ENCODE measurements at regions of chr19 and their contacts with region 1.

Region 1: GRCh38 chr19:11380653-11381534 is 3.2 kb downstream of the EPOR start:
- DNase-seq: peak; percentile 95
- H3K4me3 ChIP-seq: peak overlapping the region; percentile 47 to 61 (median 47)
- H3K27ac ChIP-seq: peak overlapping the region; percentile 66
- H3K4me1 ChIP-seq: peaks cover 44% of the 10 kb centered on the region
- H3K27me3 ChIP-seq: no peaks in the 10 kb centered on the region
- CTCF ChIP-seq: peak; percentile 71 to 86
- POLR2A ChIP-seq: peak; percentile 36

Region 2: GRCh38 chr19:11115895-11116446 is 264.9 kb before region 1 on chr19:
- CTCF ChIA-PET with region 1: no interaction called
- POLR2A ChIA-PET with region 1: no interaction called
- dilution Hi-C with region 1: no loop called
- intact Hi-C with region 1: no loop called
- DNase-seq: no peak
- H3K4me3 ChIP-seq: no peak overlapping the region
- H3K27ac ChIP-seq: no peak overlapping the region
- H3K4me1 ChIP-seq: no peaks in the 10 kb centered on the region
- H3K27me3 ChIP-seq: no peaks in the 10 kb centered on the region
- CTCF ChIP-seq: no peak
- POLR2A ChIP-seq: no peak

Region 3: DNA sequence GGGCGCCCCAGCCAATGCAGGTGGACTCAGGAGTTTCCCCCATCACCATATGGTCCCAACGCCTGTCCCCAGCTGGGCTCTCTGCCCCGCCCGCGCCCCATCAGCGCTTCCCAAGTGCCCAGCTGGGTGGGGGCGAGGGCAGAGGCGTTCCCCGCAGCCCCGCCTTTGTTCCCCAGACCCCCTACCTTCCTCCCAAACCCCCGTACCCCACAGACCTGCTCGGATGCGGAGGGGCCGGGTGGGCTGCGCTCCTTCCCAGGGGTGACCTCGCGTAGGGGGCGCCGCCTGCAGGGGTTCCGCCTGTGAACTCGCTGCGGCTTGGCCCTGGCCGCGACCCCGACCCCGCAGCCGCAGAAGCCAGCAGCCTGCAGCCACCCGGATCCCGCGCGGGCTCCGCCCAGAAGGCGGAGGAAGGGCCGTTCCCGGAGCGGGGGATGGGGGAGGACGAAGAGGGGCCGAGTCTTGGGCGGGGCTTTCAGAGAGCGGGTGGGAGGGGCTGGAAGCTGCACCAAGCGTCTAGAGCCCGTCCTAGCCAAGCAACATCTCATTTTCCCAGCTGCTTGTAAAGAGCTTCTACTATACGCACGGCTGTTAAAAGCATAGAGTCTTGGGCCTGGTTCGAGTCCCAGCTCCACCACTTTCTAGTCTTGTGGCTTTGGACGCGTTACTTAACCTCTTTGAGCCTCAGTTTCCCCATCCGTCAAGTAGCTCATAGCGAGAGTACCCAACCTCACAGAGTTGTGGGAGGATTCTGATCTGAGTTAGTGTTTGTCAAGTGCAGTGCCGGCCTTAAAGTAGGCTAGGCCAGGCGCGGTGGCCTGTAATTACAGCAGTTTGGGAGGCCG is 41.4 kb before region 1 on chr19 and contains the start of gene RAB3D:
- CTCF ChIA-PET with region 1: interaction called, 11 read pairs
- POLR2A ChIA-PET with region 1: interaction called, 4 read pairs
- dilution Hi-C with region 1: no loop called
- intact Hi-C with region 1: loop called (anchors 1 kb)
- DNase-seq: peak; percentile 88
- H3K4me3 ChIP-seq: peak within 1 kb of the TSS; percentile 43 to 91 (median 52)
- H3K27ac ChIP-seq: no peak within 1 kb of the TSS
- H3K4me1 ChIP-seq: peaks cover 16% of the 10 kb centered on the region
- H3K27me3 ChIP-seq: no peaks in the 10 kb centered on the region
- CTCF ChIP-seq: no peak
- POLR2A ChIP-seq: peak; percentile 54
- total RNA-seq, gene RAB3D: 41.1 and 48.2 TPM in 2 replicates

Region 4: GRCh38 chr19:11355160-11356073 is 25.5 kb before region 1 on chr19 and contains the start of gene PLPPR2:
- CTCF ChIA-PET with region 1: interaction called, 6 read pairs
- POLR2A ChIA-PET with region 1: no interaction called
- dilution Hi-C with region 1: no loop called
- intact Hi-C with region 1: loop called (anchors 1 kb)
- DNase-seq: peak; percentile 94
- H3K4me3 ChIP-seq: peak within 1 kb of the TSS in 2 of 3 experiments; percentile 1 to 74
- H3K27ac ChIP-seq: no peak within 1 kb of the TSS
- H3K4me1 ChIP-seq: no peaks in the 10 kb centered on the region
- H3K27me3 ChIP-seq: no peaks in the 10 kb centered on the region
- CTCF ChIP-seq: no peak
- POLR2A ChIP-seq: peak; percentile 79
- total RNA-seq, gene PLPPR2: 22.8 and 23.7 TPM in 2 replicates

Region 5: GRCh38 chr19:11390933-11391680 is 10.2 kb after region 1 on chr19:
- CTCF ChIA-PET with region 1: interaction called, 11 read pairs
- POLR2A ChIA-PET with region 1: no interaction called
- dilution Hi-C with region 1: no loop called
- intact Hi-C with region 1: no loop called
- DNase-seq: no peak
- H3K4me3 ChIP-seq: no peak overlapping the region
- H3K27ac ChIP-seq: no peak overlapping the region
- H3K4me1 ChIP-seq: no peaks in the 10 kb centered on the region
- H3K27me3 ChIP-seq: no peaks in the 10 kb centered on the region
- CTCF ChIP-seq: no peak
- POLR2A ChIP-seq: no peak

Region 6: GRCh38 chr19:11422163-11423021 is 41.5 kb after region 1 on chr19:
- CTCF ChIA-PET with region 1: interaction called, 8 read pairs
- POLR2A ChIA-PET with region 1: interaction called, 9 read pairs
- dilution Hi-C with region 1: no loop called
- intact Hi-C with region 1: loop called (anchors 5 kb)
- DNase-seq: peak; percentile 25
- H3K4me3 ChIP-seq: no peak overlapping the region
- H3K27ac ChIP-seq: no peak overlapping the region
- H3K4me1 ChIP-seq: peaks cover 9% of the 10 kb centered on the region
- H3K27me3 ChIP-seq: peaks cover 36 to 39% of the 10 kb centered on the region in 2 experiments
- CTCF ChIP-seq: no peak
- POLR2A ChIP-seq: no peak

Region 7: DNA sequence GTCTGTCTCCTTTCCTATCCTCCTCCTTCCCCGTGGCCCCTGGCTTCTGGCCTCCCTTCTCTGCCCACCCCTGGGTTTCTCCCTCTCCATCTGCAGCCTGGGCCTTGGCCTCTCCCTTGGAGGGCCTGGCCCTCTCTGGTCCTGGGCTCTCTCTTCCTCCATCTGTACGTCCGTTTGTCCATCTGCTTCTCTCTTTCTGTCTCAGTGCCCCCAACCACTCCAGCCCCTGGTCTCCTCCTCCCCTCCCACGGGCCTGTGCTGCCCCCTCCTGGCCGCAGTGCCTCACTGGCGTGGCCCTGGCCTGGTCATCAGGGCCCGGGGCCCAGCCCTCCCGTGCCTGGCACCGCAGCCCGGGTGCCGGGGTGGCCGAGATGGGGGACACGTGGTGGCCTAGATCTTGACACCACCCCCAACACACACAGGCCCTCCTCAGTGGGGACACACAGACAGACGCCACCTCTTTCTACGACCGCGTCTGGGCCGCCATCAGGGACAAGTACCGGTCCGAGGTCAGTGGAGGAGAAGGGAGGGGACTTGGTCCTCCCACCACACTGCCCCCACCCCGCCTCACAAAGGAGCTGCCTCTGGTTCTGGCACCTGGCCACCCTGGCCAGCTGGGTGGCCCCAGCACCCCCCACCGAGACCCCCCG is 65.9 kb after region 1 on chr19:
- CTCF ChIA-PET with region 1: interaction called, 21 read pairs
- POLR2A ChIA-PET with region 1: interaction called, 6 read pairs
- dilution Hi-C with region 1: no loop called
- intact Hi-C with region 1: loop called (anchors 1 kb)
- DNase-seq: peak; percentile 21
- H3K4me3 ChIP-seq: no peak overlapping the region
- H3K27ac ChIP-seq: no peak overlapping the region
- H3K4me1 ChIP-seq: no peaks in the 10 kb centered on the region
- H3K27me3 ChIP-seq: no peaks in the 10 kb centered on the region
- CTCF ChIP-seq: peak; percentile 74 to 78
- POLR2A ChIP-seq: no peak

Region 8: GRCh38 chr19:11505032-11505503 is 124.2 kb after region 1 on chr19:
- CTCF ChIA-PET with region 1: no interaction called
- POLR2A ChIA-PET with region 1: no interaction called
- dilution Hi-C with region 1: no loop called
- intact Hi-C with region 1: no loop called
- DNase-seq: peak; percentile 98
- H3K4me3 ChIP-seq: peak overlapping the region; percentile 44 to 71 (median 71)
- H3K27ac ChIP-seq: peak overlapping the region; percentile 81
- H3K4me1 ChIP-seq: peaks cover 10% of the 10 kb centered on the region
- H3K27me3 ChIP-seq: no peaks in the 10 kb centered on the region
- CTCF ChIP-seq: no peak
- POLR2A ChIP-seq: no peak